GM12878 (cell line): ENCODE measurements at regions of chr1 and their contacts with region 1.

Region 1: GRCh38 chr1:200620273-200621131 is at the start of gene KIF14:
- DNase-seq: peak; percentile 67
- ATAC-seq: peak; percentile 92
- H3K4me3 ChIP-seq: peak within 1 kb of the TSS; percentile 88
- H3K27ac ChIP-seq: peak within 1 kb of the TSS; percentile 74
- H3K4me1 ChIP-seq: peaks cover 20% of the 10 kb centered on the region
- H3K27me3 ChIP-seq: no peaks in the 10 kb centered on the region
- CTCF ChIP-seq: no peak
- EP300 ChIP-seq: no peak
- POLR2A ChIP-seq: peak; percentile 82
- RAD21 ChIP-seq: no peak
- polyA plus RNA-seq, gene KIF14: 6.8 to 6.9 TPM

Region 2: DNA sequence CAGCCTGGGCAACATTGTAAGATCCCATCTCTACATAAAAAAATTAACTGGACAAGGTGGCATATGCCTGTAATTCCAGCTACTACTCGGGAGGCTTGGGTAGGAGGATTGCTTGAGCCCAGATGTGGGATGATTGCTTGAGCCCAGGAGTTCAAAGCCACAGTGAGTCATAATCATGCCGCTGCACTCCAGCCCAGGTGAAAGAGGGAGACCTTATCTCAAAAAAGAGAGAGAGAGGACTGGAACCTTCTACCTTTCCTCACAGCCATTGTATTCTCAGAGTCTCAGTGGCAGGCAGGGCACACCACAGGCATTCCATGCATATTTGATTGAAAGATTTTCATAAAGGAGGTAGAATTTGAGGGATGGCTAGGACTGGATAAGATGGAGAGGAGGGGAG is 78.3 kb before region 1 on chr1:
- CTCF ChIA-PET with region 1: interaction called, 5 read pairs
- POLR2A ChIA-PET with region 1: interaction called, 3 read pairs
- RAD21 ChIA-PET with region 1: interaction called, 11 read pairs
- SMC1A ChIA-PET with region 1: no interaction called
- in situ Hi-C with region 1: no loop called
- intact Hi-C with region 1: no loop called
- DNase-seq: no peak
- ATAC-seq: no peak
- H3K4me3 ChIP-seq: no peak overlapping the region
- H3K27ac ChIP-seq: no peak overlapping the region
- H3K4me1 ChIP-seq: peaks cover 4% of the 10 kb centered on the region
- H3K27me3 ChIP-seq: no peaks in the 10 kb centered on the region
- CTCF ChIP-seq: no peak
- EP300 ChIP-seq: no peak
- POLR2A ChIP-seq: no peak
- RAD21 ChIP-seq: no peak

Region 3: GRCh38 chr1:200669314-200670241 is 49.1 kb after region 1 on chr1 and contains the start of gene DDX59:
- CTCF ChIA-PET with region 1: interaction called, 36 read pairs
- POLR2A ChIA-PET with region 1: interaction called, 11 read pairs
- RAD21 ChIA-PET with region 1: interaction called, 175 read pairs
- SMC1A ChIA-PET with region 1: interaction called, 79 read pairs
- in situ Hi-C with region 1: no loop called
- intact Hi-C with region 1: loop called (anchors 1 kb)
- DNase-seq: peak; percentile 80
- ATAC-seq: peak; percentile 90
- H3K4me3 ChIP-seq: peak within 1 kb of the TSS; percentile 85
- H3K27ac ChIP-seq: peak within 1 kb of the TSS; percentile 98
- H3K4me1 ChIP-seq: no peaks in the 10 kb centered on the region; the same call in 1 of the 2 replicates
- H3K27me3 ChIP-seq: no peaks in the 10 kb centered on the region
- CTCF ChIP-seq: no peak
- EP300 ChIP-seq: no peak
- POLR2A ChIP-seq: peak; percentile 91
- RAD21 ChIP-seq: no peak
- polyA plus RNA-seq, gene DDX59: 17.3 to 17.5 TPM

Region 4: DNA sequence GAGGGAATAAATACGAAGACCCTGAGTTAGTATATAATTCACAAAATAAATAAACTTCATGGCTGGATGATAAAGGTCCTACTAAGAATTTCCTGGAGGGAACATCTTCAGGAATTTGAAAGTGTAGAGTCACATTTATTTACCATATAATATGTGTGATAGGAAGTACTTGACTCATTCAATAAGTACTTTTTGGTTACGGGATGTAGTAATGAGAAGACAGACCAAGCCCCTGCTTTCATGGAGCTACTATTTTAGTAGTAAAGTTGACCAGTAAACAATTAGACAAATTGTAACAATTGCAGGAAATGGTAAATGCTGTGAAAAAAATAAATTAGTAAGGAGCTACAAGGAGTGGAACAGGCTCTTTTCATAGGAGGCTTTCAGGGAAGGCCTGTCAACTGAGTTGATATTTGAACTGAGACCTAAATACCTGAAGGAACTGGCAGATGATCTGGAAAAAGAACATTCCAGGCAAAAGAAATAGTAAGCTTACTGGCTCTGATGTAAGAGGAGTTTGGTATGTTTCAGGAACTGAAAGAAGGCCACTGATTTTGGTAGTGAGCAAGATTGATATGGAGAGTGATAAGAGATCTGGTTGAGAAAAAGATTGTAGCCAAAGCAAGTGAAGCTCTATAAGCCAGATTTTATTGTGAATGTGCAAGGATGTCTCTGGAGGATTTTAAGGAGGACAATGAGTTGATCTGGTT is 154.4 kb after region 1 on chr1:
- CTCF ChIA-PET with region 1: interaction called, 45 read pairs
- POLR2A ChIA-PET with region 1: interaction called, 6 read pairs
- RAD21 ChIA-PET with region 1: interaction called, 16 read pairs
- SMC1A ChIA-PET with region 1: interaction called, 14 read pairs
- in situ Hi-C with region 1: no loop called
- intact Hi-C with region 1: no loop called
- DNase-seq: no peak
- ATAC-seq: peak; percentile 86
- H3K4me3 ChIP-seq: peak overlapping the region; percentile 29; the same call in 1 of the 2 replicates
- H3K27ac ChIP-seq: peak overlapping the region; percentile 74
- H3K4me1 ChIP-seq: peaks cover 24% of the 10 kb centered on the region
- H3K27me3 ChIP-seq: no peaks in the 10 kb centered on the region
- CTCF ChIP-seq: no peak
- EP300 ChIP-seq: peak in 1 of 2 experiments; percentile 37; a peak in 1 of 4 replicates
- POLR2A ChIP-seq: no peak
- RAD21 ChIP-seq: no peak

Region 5: GRCh38 chr1:200811704-200812103 is 191.2 kb after region 1 on chr1:
- CTCF ChIA-PET with region 1: interaction called, 52 read pairs
- POLR2A ChIA-PET with region 1: interaction called, 5 read pairs
- RAD21 ChIA-PET with region 1: interaction called, 59 read pairs
- SMC1A ChIA-PET with region 1: interaction called, 55 read pairs
- in situ Hi-C with region 1: no loop called
- intact Hi-C with region 1: no loop called
- DNase-seq: no peak
- ATAC-seq: no peak
- H3K4me3 ChIP-seq: no peak overlapping the region
- H3K27ac ChIP-seq: no peak overlapping the region
- H3K4me1 ChIP-seq: no peaks in the 10 kb centered on the region
- H3K27me3 ChIP-seq: no peaks in the 10 kb centered on the region
- CTCF ChIP-seq: no peak
- EP300 ChIP-seq: no peak
- POLR2A ChIP-seq: no peak
- RAD21 ChIP-seq: no peak

Region 6: GRCh38 chr1:200896531-200897196 is 276.2 kb after region 1 on chr1:
- CTCF ChIA-PET with region 1: interaction called, 6 read pairs
- POLR2A ChIA-PET with region 1: interaction called, 3 read pairs
- RAD21 ChIA-PET with region 1: interaction called, 5 read pairs
- SMC1A ChIA-PET with region 1: interaction called, 13 read pairs
- in situ Hi-C with region 1: no loop called
- intact Hi-C with region 1: no loop called
- DNase-seq: no peak
- ATAC-seq: no peak
- H3K4me3 ChIP-seq: no peak overlapping the region
- H3K27ac ChIP-seq: no peak overlapping the region
- H3K4me1 ChIP-seq: peaks cover 19% of the 10 kb centered on the region
- H3K27me3 ChIP-seq: no peaks in the 10 kb centered on the region
- CTCF ChIP-seq: no peak
- EP300 ChIP-seq: no peak
- POLR2A ChIP-seq: no peak
- RAD21 ChIP-seq: no peak

Region 7: DNA sequence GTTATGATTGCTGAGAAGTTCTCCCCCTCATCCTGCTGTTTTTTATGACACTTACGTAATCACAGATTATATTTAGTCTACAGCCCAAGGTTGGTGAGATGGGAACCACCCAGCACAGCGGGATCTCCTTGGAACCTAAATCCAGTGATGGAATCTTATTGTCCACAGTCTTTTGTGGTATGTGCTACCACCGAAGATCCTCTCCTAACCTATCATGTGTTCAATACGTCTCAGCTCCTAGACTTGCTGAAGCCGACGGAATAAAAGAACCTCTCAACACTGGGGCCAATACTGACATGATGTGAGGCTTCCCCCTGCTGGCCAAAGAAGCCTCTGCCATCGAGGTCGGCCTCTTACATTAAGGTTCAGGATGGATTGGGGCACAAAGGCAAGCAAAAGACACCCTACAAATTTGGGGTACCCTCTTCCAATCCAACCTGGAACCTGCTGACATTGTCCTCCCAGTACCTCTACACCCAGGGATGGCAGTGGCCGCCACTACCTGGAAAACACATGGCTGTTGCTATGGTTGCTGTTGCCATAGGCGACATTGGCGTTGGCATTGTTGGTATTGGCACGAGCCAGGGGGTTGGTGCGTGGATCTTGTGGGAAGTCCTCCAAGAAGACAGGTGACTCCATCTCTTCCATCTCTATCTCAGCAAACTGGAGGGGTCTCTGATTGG is 422.4 kb after region 1 on chr1:
- CTCF ChIA-PET with region 1: interaction called, 13 read pairs
- POLR2A ChIA-PET with region 1: no interaction called
- RAD21 ChIA-PET with region 1: interaction called, 13 read pairs
- SMC1A ChIA-PET with region 1: interaction called, 3 read pairs
- in situ Hi-C with region 1: no loop called
- intact Hi-C with region 1: loop called (anchors 5 kb)
- DNase-seq: no peak
- ATAC-seq: peak; percentile 97
- H3K4me3 ChIP-seq: no peak overlapping the region
- H3K27ac ChIP-seq: no peak overlapping the region
- H3K4me1 ChIP-seq: no peaks in the 10 kb centered on the region
- H3K27me3 ChIP-seq: no peaks in the 10 kb centered on the region; a peak in 1 of 4 replicates
- CTCF ChIP-seq: peak; percentile 87 to 94 (median 93); a peak in 5 of 6 replicates
- EP300 ChIP-seq: no peak
- POLR2A ChIP-seq: no peak
- RAD21 ChIP-seq: peak; percentile 99

Region 8: GRCh38 chr1:201137579-201138310 is 517.2 kb after region 1 on chr1:
- CTCF ChIA-PET with region 1: no interaction called
- POLR2A ChIA-PET with region 1: no interaction called
- RAD21 ChIA-PET with region 1: no interaction called
- SMC1A ChIA-PET with region 1: no interaction called
- in situ Hi-C with region 1: no loop called
- intact Hi-C with region 1: no loop called
- DNase-seq: no peak
- ATAC-seq: no peak
- H3K4me3 ChIP-seq: no peak overlapping the region
- H3K27ac ChIP-seq: no peak overlapping the region
- H3K4me1 ChIP-seq: no peaks in the 10 kb centered on the region
- H3K27me3 ChIP-seq: no peaks in the 10 kb centered on the region
- CTCF ChIP-seq: no peak
- EP300 ChIP-seq: no peak
- POLR2A ChIP-seq: no peak
- RAD21 ChIP-seq: no peak